RWPE1 (cell line): ENCODE measurements at regions of chr5 and their contacts with region 1.

Region 1: DNA sequence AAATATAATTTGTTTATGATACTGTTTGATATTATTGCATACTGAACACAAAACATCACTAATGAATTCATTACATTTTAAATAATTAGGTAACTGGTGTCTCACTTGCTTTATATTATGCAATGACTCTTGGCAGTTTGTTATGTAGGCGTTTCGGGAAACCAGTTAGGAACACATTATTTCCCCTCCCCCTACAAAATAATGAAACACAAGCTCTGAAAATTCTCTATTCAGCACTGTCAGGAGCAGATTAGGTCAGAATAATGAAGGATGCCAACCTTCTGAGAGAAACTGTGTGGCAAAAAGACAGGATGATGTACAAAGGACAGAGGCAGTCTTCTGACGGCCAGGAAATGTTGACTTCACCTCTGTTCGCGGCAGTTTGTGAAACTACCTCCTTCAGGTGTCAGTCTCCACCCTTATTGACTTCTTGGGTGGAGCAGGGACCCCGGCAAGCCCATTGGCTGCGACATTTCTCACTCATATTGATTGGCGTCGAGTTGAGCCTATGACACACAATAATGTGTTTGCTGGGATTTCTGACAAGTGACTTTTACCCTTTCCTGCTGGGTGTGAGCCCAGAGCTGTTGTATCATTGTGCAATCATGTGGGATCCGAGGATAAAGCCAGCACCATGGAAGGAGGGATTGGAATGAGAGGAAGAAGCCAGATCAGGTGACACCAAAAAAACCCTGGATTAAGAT is 33.9 kb downstream of the SH3PXD2B start:
- DNase-seq: peak; percentile 100
- H3K27ac ChIP-seq: peak overlapping the region; percentile 96
- CTCF ChIP-seq: no peak

Region 2: DNA sequence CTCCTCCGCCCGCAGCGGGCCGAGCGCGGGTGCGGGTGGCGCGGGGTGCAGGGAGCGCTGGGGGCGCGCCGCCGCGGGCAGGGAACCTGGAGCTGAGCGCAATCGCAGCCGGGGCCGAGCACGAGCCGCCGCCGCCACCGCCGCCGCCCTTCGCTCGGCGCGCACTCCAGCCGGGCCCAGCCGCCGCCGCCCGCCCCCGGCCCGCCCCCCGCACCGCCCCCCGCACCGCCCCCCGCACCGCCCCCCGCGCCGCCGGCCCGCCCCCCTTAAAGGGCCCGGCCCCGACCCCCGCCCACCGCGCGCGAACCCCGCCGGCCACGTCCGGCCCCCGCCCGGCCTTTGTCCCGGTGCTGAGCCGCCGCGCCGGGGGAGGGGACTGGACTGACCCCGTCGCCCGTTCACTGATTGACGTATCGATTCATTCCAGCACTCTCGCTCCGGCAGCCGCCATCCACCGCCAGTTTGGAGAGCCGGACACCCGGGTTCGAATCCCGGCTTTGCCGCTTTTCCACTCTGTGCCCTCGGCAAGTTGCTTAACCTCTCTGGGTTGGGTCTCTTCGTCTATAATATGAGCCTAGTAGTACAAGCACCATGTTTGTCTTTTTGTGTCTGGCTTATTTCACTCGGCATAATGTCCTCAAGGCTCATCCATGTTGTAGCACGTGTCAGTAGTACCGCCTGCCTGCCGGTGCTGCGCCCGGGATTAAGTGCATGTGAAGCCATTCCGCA is 34.1 kb after region 1 on chr5 and contains the start of gene SH3PXD2B:
- CTCF ChIA-PET with region 1: interaction called, 23 read pairs
- POLR2A ChIA-PET with region 1: no interaction called
- DNase-seq: peak; percentile 72
- H3K27ac ChIP-seq: peak within 1 kb of the TSS; percentile 97
- CTCF ChIP-seq: no peak